CD4-positive, alpha-beta T cell (primary cell): ENCODE measurements at regions of chr9 and their contacts with region 1.

Region 1: DNA sequence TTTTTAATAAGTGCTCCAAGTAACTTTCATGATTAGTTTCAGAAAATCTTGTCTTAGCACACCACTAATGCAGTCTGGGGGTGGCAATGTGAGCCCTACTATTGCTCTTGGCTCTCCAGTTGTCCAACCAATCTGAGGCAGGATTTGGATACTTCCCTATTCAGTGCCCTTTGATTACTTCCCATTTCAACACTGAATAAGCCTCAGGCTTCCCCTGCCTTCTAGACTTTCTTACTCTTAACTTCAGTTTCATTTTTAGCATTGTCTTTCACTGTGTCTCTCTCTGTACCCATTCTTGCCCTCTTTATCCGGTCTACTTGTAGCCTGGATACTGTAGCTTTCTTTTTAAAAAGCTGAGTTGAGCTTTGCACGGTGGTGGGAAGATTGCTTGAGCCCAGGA is 186.1 kb downstream of the C9orf152 start:
- DNase-seq: peak in 3 of 14 experiments; percentile 24 to 35 (median 28)
- ATAC-seq: no peak
- H3K4me3 ChIP-seq: no peak overlapping the region
- H3K4me3 Mint-ChIP-seq: no peak overlapping the region
- H3K27ac ChIP-seq: no peak overlapping the region
- H3K27ac Mint-ChIP-seq: peak overlapping the region; percentile 65
- H3K4me1 ChIP-seq: peaks cover 2% of the 10 kb centered on the region
- H3K4me1 Mint-ChIP-seq: peaks cover 7% of the 10 kb centered on the region
- H3K27me3 ChIP-seq: no peaks in the 10 kb centered on the region
- H3K27me3 Mint-ChIP-seq: no peaks in the 10 kb centered on the region
- CTCF ChIP-seq: no peak

Region 2: DNA sequence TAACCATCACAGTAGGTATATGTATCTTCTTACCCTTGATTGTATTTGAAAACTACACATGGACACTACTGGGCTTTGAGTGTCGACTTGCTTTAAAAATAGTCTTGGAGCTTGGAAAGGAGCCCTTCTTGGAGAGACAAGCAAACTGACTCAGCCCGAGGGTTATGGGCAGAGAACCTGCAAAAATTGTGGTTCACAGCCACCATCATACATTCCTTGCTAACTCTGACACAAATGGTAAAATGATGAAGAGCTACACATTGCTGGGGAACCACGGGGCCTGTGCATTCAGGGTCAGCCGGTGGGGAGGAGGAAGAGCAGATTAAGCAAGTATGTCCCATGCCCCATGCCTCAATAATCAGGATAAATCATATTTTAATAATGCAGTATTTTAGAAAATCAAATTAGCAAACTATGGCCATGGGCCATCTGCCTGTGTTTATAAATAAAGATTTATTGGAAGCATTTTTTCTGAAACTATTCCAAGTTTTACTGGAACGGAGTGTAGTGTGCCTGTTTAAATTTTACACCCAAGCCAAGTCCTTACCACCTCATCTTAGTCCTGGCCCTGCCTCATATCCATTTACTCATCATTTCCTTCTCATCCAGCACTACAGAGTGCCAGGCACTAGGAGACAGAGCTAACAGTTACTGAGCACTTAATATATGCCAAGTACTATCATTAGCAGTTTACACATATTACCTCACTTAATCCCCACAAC is 46.2 kb before region 1 on chr9:
- CTCF ChIA-PET with region 1: no interaction called
- POLR2A ChIA-PET with region 1: no interaction called
- intact Hi-C with region 1: no loop called
- DNase-seq: no peak
- ATAC-seq: no peak
- H3K4me3 ChIP-seq: no peak overlapping the region
- H3K4me3 Mint-ChIP-seq: no peak overlapping the region
- H3K27ac ChIP-seq: no peak overlapping the region
- H3K27ac Mint-ChIP-seq: no peak overlapping the region
- H3K4me1 ChIP-seq: peaks cover 28% of the 10 kb centered on the region
- H3K4me1 Mint-ChIP-seq: peaks cover 34% of the 10 kb centered on the region
- H3K27me3 ChIP-seq: no peaks in the 10 kb centered on the region
- H3K27me3 Mint-ChIP-seq: no peaks in the 10 kb centered on the region
- CTCF ChIP-seq: no peak

Region 3: GRCh38 chr9:110040788-110041187 is 18.9 kb after region 1 on chr9:
- CTCF ChIA-PET with region 1: no interaction called
- POLR2A ChIA-PET with region 1: no interaction called
- intact Hi-C with region 1: loop called in 1 of 2 experiments (anchors 2 kb)
- DNase-seq: no peak
- ATAC-seq: no peak
- H3K4me3 ChIP-seq: no peak overlapping the region
- H3K4me3 Mint-ChIP-seq: no peak overlapping the region
- H3K27ac ChIP-seq: no peak overlapping the region
- H3K27ac Mint-ChIP-seq: no peak overlapping the region
- H3K4me1 ChIP-seq: no peaks in the 10 kb centered on the region
- H3K4me1 Mint-ChIP-seq: no peaks in the 10 kb centered on the region
- H3K27me3 ChIP-seq: no peaks in the 10 kb centered on the region
- H3K27me3 Mint-ChIP-seq: no peaks in the 10 kb centered on the region
- CTCF ChIP-seq: no peak

Region 4: DNA sequence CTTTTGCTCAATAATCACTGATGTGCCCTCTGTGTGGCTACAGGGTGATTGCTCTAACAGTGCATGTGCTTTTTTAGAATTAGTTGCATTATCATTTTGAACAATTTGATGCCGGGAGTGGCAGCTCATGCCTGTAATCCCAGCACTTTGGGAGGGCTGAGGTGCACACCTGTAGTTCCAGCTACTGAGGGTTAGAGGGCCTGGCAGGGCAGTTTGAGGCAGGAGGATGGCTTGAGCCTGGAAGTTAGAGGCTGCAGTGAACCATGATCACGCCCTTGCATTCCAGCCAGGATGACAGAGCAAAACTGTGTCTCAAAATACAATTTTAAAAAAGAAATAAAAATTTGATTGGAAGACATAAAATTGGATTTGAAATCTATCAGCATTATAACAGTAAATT is 207.1 kb after region 1 on chr9:
- CTCF ChIA-PET with region 1: no interaction called
- POLR2A ChIA-PET with region 1: no interaction called
- intact Hi-C with region 1: no loop called
- DNase-seq: no peak
- ATAC-seq: no peak
- H3K4me3 ChIP-seq: no peak overlapping the region
- H3K4me3 Mint-ChIP-seq: no peak overlapping the region
- H3K27ac ChIP-seq: no peak overlapping the region
- H3K27ac Mint-ChIP-seq: no peak overlapping the region
- H3K4me1 ChIP-seq: no peaks in the 10 kb centered on the region
- H3K4me1 Mint-ChIP-seq: no peaks in the 10 kb centered on the region
- H3K27me3 ChIP-seq: no peaks in the 10 kb centered on the region
- H3K27me3 Mint-ChIP-seq: no peaks in the 10 kb centered on the region
- CTCF ChIP-seq: no peak